AG04449 (cell line): ENCODE measurements at regions of chr5 and their contacts with region 1.

Region 1: DNA sequence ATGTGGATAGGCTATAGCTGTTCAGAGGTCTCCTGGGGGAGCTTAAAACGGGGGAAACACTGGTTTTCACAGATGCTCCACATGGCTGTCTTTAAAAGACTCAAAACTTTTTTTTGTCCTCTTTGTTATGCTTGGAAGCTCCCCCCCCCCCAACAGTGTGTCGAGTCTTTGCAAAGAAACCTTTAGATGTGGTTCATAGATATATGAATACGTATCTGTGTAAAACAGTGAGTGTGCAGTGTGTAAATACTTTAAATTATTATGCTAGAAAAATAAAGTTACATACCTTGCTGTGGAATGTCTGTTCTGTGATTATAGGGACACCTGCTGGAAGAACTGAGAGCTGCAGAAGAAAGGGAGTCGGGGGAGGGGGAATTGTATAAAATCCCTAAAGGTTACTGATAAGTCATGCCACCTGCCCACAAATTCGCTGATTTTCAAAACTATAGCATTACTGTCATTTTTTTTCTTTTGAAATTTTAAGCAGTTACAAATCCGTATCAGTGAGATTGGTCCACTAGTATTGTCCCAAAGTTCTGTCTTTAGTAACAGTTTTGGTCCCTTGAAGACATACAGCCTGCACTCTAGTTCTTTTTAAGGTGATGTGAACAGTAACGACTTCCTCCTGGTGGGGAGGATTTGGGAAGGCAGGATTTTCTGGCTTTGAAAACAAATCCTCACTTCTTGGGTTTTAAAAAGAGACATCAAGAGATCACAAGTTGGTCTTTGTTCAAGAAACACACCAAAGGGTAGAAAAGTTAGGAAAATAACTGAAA is 22.9 kb downstream of the RGMB start:
- DNase-seq: no peak
- H3K4me3 ChIP-seq: no peak overlapping the region
- CTCF ChIP-seq: peak; percentile 65

Region 2: GRCh38 chr5:98721231-98721928 is 75.0 kb before region 1 on chr5:
- CTCF ChIA-PET with region 1: no interaction called
- POLR2A ChIA-PET with region 1: no interaction called
- DNase-seq: no peak
- H3K4me3 ChIP-seq: no peak overlapping the region
- CTCF ChIP-seq: no peak

Region 3: DNA sequence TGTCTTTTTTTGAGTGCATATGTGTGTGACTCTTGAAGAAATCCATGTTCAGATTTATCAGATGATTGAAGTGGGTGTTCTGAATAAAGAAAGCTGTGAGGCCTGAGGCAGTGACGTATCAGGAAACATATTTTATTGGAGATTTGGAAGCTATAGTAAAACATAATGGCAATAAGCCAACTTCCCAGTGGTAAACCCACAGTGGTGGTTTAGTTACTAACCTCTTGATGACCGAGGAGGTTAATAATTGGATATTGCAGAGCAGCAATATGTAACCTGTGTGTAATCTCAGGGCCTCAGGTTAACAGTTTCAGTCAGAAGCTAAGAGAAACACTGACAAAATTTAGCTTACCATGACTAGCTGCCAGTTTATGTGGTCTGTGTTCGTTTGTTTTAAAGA is 16.0 kb before region 1 on chr5:
- CTCF ChIA-PET with region 1: interaction called, 21 read pairs
- POLR2A ChIA-PET with region 1: no interaction called
- DNase-seq: no peak
- H3K4me3 ChIP-seq: no peak overlapping the region
- CTCF ChIP-seq: no peak

Region 4: DNA sequence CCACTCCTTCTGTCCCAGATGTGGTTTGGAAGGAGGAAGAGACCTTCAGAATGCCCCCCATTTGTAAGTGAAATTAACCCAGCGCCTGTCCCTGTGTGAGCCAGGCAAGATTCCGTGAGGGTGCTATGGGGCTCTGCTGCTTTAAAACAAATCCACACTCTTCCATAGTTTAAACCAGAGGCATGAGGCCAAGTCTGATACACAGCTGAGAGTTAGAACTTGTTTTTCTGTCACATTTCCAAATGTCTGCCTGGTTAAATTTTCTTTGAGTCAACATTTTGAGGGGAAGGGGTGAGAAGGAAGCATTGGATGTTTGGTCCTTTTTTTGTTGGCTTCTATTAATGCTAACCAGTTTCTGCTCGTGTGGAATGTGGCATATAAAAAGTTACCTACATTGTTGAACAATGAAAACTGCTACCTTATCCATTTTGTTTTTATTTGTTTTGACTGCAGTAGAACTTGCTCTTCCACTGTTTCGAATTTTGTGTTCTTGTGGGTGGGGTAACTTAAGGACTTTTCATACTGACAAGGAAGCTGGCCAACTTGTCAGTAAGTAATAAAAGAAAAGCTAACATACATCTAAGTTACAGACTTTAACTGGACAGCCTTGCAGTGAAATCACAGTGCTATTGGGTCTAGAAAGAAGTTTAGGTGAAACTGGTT is 10.1 kb before region 1 on chr5:
- CTCF ChIA-PET with region 1: interaction called, 21 read pairs
- POLR2A ChIA-PET with region 1: no interaction called
- DNase-seq: no peak
- H3K4me3 ChIP-seq: no peak overlapping the region
- CTCF ChIP-seq: no peak

Region 5: DNA sequence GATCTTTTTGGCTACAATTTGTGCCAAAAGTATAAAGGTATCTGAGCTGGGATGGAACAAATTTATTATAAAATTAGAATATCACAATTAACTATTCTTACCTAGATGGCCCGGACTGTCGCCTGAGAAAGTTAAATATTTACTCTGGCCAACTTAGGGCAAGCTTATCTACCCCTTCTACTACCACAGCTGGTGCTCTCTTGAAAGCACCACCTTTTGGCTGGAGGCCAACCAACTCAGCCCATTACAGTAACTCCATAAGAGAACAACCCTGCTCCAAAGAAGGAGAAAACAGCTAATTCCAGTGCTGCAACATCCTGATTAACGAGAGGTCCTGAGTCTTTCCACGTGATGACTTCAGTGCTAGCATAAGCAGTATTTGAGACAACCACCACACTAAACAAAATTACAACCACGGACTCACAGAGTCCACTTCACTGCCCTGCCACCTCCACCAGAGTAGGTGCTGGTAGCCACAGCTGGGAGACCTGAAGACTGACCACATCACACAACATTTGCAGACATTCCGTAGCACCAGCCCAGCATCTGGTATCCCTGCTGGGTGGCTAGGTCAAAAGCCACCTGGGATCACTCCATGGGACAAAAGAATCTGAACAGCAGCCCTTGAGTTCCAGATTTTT is 20.3 kb after region 1 on chr5:
- CTCF ChIA-PET with region 1: interaction called, 14 read pairs
- POLR2A ChIA-PET with region 1: no interaction called
- DNase-seq: no peak
- H3K4me3 ChIP-seq: no peak overlapping the region
- CTCF ChIP-seq: no peak